Calu3 (cell line): ENCODE measurements at regions of chr7 and their contacts with region 1.

Region 1: GRCh38 chr7:95589031-95589430 is 7.3 kb downstream of the PDK4 start:
- DNase-seq: peak; percentile 41
- H3K4me3 Mint-ChIP-seq: no peak overlapping the region
- H3K27ac Mint-ChIP-seq: peak overlapping the region; percentile 34
- H3K4me1 Mint-ChIP-seq: no peaks in the 10 kb centered on the region
- H3K27me3 Mint-ChIP-seq: no peaks in the 10 kb centered on the region
- CTCF ChIP-seq: no peak

Region 2: DNA sequence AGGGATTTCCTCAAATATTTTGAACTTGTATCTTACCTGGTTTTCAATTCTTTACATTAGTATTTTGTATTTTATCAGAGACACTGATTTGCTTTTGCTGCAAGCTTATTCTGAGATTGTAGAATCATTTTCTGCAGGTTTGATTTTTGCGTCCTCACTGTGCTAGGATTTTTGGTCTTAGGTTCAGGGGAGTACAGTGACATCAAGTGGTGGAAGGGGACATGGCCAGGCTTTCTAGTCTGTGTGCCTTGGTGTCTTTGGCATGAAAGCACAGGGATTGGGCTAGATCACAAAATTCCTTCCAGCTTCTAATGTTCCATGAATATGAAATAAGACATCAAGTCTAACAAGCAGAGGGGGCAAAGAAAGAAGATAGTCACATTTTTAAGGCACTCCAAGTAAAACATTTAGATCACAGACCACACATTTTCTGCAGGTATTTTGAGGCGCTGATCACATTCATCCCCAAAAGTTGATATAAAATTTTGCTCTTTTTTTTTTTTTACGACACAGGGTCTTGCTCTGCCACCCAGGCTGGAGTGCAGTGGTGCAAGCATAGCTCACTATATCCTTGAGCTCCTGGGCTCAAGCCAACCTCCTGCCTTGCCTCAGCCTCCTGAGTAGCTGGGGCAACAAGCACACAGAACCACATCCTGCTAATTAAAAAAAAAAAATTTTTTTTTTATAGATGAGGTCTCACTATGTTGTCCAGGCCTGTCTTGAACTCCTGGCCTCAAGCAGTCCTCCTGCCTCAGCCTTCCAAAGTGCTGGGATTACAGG is 389.1 kb before region 1 on chr7:
- CTCF ChIA-PET with region 1: no interaction called
- intact Hi-C with region 1: no loop called
- DNase-seq: peak; percentile 16
- H3K4me3 Mint-ChIP-seq: no peak overlapping the region
- H3K27ac Mint-ChIP-seq: no peak overlapping the region
- H3K4me1 Mint-ChIP-seq: peaks cover 2% of the 10 kb centered on the region
- H3K27me3 Mint-ChIP-seq: no peaks in the 10 kb centered on the region
- CTCF ChIP-seq: peak; percentile 28

Region 3: DNA sequence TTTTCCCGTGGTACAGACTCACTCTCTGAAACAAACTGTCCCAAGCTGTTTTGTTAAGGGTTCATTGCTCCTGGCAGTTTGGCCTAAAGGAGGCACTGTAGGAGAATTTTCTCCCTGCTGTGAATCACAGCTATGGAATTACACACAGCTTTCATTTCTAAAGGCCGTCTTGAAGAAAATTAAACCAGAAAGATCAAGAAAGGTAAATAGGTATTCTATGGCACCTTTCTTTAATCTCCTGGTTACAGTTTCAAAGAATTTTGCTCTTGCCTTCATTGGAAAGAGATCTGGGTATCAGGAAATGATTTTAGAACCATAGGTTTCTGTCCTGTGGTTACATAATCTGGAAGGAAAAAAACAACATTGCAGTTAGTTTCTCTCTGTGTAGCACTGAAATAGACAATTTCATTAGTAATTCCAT is 43.9 kb before region 1 on chr7:
- CTCF ChIA-PET with region 1: no interaction called
- intact Hi-C with region 1: loop called (anchors 5 kb)
- DNase-seq: peak; percentile 43
- H3K4me3 Mint-ChIP-seq: peak overlapping the region; percentile 64
- H3K27ac Mint-ChIP-seq: peak overlapping the region; percentile 92
- H3K4me1 Mint-ChIP-seq: peaks cover 16% of the 10 kb centered on the region
- H3K27me3 Mint-ChIP-seq: no peaks in the 10 kb centered on the region
- CTCF ChIP-seq: peak; percentile 20

Region 4: DNA sequence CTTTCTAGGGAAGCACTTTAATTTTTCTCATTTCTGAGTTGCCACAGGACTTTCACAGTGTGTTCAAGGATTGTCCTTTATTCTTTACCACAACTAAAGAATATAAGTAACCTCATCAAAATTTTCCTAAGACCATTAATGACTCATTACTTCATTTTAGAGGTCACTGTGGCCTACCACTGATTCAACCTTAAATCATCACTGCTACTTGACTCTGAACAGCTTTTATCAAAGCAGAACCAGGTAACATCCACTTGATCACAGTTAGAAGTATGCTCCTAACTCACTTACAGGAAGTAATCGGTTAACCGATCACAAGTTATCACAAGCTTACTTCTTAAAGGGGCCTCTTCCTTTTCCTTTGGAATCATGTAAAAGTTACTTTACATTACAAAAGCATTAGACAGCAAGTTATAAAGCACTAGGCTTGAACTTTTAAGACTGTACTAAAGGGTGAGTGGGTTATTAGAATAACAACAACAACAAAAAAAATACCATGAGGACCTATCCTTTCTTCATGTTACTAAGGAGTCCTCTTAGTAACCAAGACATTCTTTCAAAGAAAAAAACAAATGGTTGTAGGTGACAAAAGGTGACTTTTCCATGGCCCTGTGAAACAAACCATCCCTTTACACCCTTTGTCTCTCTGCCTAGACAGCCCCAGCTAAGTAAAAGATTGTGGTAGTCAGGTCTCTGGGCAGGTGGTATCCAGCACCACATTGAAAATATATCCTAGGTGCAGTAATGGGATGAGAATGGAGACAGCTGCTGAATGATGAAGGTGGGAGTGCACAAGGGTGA is 47.3 kb after region 1 on chr7:
- CTCF ChIA-PET with region 1: no interaction called
- intact Hi-C with region 1: no loop called
- DNase-seq: no peak
- H3K4me3 Mint-ChIP-seq: no peak overlapping the region
- H3K27ac Mint-ChIP-seq: no peak overlapping the region
- H3K4me1 Mint-ChIP-seq: no peaks in the 10 kb centered on the region
- H3K27me3 Mint-ChIP-seq: no peaks in the 10 kb centered on the region
- CTCF ChIP-seq: no peak